ENCODE measurements at regions of chr1 and their contacts with region 1.

Region 1: DNA sequence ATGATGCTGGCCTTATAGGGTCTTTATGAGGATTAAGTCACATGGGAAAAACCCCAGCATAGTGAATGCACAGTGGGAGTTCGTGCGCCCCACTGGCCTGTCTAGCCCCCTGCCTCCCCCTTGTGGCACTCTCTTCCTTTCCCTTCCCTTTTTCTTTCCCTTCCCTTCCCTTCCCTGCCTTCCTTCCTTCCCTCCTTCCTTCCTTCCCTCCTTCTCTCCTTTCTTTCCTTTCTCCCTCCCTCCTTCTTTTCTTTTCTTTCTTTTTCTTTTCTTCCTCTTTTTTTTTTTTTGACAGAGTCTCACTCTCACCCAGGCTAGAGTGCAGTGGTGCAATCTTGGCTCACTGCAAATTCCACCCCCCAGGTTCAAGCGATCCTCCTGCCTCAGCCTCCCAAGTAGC is 38.6 kb downstream of the HTR6 start:
- DNase-seq: no peak
- H3K4me3 ChIP-seq: no peak overlapping the region
- H3K27ac ChIP-seq: no peak overlapping the region
- H3K4me1 ChIP-seq: peaks cover 0 to 8% (median 2%) of the 10 kb centered on the region in 4 donors
- H3K27me3 ChIP-seq: no peaks in the 10 kb centered on the region
- CTCF ChIP-seq: no peak

Region 2: GRCh38 chr1:18373882-18374493 is 1329.3 kb before region 1 on chr1:
- intact Hi-C with region 1: no loop called
- DNase-seq: no peak
- H3K4me3 ChIP-seq: no peak overlapping the region
- H3K27ac ChIP-seq: no peak overlapping the region
- H3K4me1 ChIP-seq: no peaks in the 10 kb centered on the region
- H3K27me3 ChIP-seq: peaks cover 0 to 27% of the 10 kb centered on the region in 2 donors
- CTCF ChIP-seq: no peak

Region 3: GRCh38 chr1:19654386-19654785 is 48.9 kb before region 1 on chr1:
- intact Hi-C with region 1: no loop called
- DNase-seq: no peak
- H3K4me3 ChIP-seq: no peak overlapping the region
- H3K27ac ChIP-seq: no peak overlapping the region
- H3K4me1 ChIP-seq: peaks cover 0 to 44% (median 28%) of the 10 kb centered on the region in 4 donors
- H3K27me3 ChIP-seq: no peaks in the 10 kb centered on the region
- CTCF ChIP-seq: no peak

Region 4: DNA sequence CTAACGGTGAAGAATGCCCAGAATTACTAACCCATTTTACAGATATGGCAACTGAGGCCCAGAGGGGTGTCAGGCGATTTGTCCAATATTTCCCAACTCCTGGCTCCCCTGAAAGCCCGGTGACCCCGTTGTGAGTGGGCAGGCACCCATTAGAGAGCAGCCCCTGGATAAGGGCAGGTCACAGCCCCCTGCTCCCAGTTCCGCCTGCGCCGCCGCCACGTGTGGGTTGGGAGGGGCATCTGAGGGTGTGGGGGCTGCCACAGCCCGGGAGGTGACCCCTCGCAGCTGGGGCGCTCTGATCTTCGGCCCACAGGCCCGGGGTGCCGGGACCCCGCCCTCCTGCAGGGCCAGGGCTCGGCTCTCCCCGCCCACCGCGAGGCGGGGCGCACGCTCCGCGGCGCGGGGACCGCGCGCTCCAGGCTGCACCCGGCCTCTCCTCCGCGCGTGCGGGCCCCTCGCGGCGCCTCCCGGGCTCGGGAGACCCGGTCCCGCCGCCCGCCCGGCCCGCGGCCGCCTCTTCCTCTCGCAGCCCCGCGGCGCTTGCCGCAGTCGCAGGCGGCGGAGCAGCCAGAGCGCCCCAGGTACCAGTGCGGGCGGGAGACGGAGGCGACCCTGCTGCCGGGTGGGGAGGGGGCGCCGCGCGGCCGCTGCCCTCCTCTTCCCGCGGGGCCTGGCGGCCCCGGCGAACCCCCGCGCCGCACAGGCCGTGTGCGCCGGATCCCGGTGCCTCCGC is 38.7 kb before region 1 on chr1 and contains the start of gene HTR6:
- intact Hi-C with region 1: loop called (anchors 2 kb)
- DNase-seq: no peak
- H3K4me3 ChIP-seq: peak within 1 kb of the TSS in 1 of 2 donors; percentile 43
- H3K27ac ChIP-seq: no peak within 1 kb of the TSS
- H3K4me1 ChIP-seq: peaks cover 0 to 22% (median 12%) of the 10 kb centered on the region in 4 donors
- H3K27me3 ChIP-seq: peaks cover 0 to 70% of the 10 kb centered on the region in 2 donors
- CTCF ChIP-seq: no peak

Measured in tibial artery (tissue), 4 donors.